ENCODE measurements at regions of chr10 and their contacts with region 1.

Region 1: GRCh38 chr10:35642027-35642792 is at the start of gene FZD8:
- DNase-seq: peak; percentile 93 to 95 (median 94)
- ATAC-seq: peak; percentile 94 to 97 (median 96)
- H3K4me3 ChIP-seq: peak within 1 kb of the TSS; percentile 74 to 97 (median 80)
- H3K27ac ChIP-seq: peak within 1 kb of the TSS; percentile 75 to 97 (median 92)
- H3K4me1 ChIP-seq: peaks cover 0 to 39% (median 17%) of the 10 kb centered on the region in 12 donors
- H3K27me3 ChIP-seq: peaks cover 0 to 48% (median 0%) of the 10 kb centered on the region in 9 donors
- CTCF ChIP-seq: peak in 6 of 12 donors; percentile 6 to 28 (median 12)
- POLR2A ChIP-seq: peak; percentile 89 to 98
- total RNA-seq, gene FZD8: 4.0 to 17.1 (median 7.8) TPM

Region 2: GRCh38 chr10:35716776-35717175 is 74.6 kb after region 1 on chr10:
- intact Hi-C with region 1: no loop called
- DNase-seq: no peak
- ATAC-seq: no peak
- H3K4me3 ChIP-seq: no peak overlapping the region
- H3K27ac ChIP-seq: no peak overlapping the region
- H3K4me1 ChIP-seq: peaks cover 0 to 14% (median 0%) of the 10 kb centered on the region in 12 donors
- H3K27me3 ChIP-seq: no peaks in the 10 kb centered on the region
- CTCF ChIP-seq: no peak
- POLR2A ChIP-seq: no peak

Region 3: DNA sequence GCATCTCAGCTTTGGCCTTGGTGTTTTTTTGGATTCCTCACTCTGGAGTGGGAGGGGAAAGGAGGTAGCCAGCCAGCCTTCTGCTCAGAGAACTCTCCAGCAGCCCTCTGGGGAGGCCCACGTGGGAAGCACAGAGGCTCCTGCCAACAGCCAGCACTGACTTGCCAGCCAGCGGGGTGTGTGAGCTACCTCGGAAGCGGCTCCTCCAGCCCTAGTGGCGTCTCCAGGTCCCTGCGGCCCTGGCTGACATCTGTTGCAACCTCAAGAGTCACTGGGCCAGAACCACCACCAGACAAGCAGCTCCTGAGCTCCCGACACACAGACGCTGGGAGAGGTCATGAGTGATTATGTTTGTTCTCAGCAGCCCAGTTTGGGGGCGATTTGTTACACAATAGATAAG is 180.1 kb after region 1 on chr10:
- intact Hi-C with region 1: loop called in 1 of 10 experiments (anchors 5 kb)
- DNase-seq: peak; percentile 72 to 89 (median 88)
- ATAC-seq: peak; percentile 95 to 99 (median 98)
- H3K4me3 ChIP-seq: no peak overlapping the region
- H3K27ac ChIP-seq: peak overlapping the region in 4 of 12 donors; percentile 8 to 52 (median 24)
- H3K4me1 ChIP-seq: peaks cover 0 to 23% (median 13%) of the 10 kb centered on the region in 12 donors
- H3K27me3 ChIP-seq: no peaks in the 10 kb centered on the region
- CTCF ChIP-seq: peak in 7 of 12 donors; percentile 20 to 50 (median 38)
- POLR2A ChIP-seq: no peak

Region 4: GRCh38 chr10:35986756-35987502 is 344.7 kb after region 1 on chr10:
- intact Hi-C with region 1: loop called in 7 of 10 experiments (anchors 5 to 10 kb)
- DNase-seq: no peak
- ATAC-seq: peak in 2 of 4 donors; percentile 41 to 80
- H3K4me3 ChIP-seq: peak overlapping the region in 3 of 12 donors; percentile 4 to 35 (median 13)
- H3K27ac ChIP-seq: peak overlapping the region in 2 of 12 donors; percentile 1 to 30
- H3K4me1 ChIP-seq: peaks cover 0 to 18% (median 3%) of the 10 kb centered on the region in 12 donors
- H3K27me3 ChIP-seq: no peaks in the 10 kb centered on the region
- CTCF ChIP-seq: no peak
- POLR2A ChIP-seq: no peak

Region 5: DNA sequence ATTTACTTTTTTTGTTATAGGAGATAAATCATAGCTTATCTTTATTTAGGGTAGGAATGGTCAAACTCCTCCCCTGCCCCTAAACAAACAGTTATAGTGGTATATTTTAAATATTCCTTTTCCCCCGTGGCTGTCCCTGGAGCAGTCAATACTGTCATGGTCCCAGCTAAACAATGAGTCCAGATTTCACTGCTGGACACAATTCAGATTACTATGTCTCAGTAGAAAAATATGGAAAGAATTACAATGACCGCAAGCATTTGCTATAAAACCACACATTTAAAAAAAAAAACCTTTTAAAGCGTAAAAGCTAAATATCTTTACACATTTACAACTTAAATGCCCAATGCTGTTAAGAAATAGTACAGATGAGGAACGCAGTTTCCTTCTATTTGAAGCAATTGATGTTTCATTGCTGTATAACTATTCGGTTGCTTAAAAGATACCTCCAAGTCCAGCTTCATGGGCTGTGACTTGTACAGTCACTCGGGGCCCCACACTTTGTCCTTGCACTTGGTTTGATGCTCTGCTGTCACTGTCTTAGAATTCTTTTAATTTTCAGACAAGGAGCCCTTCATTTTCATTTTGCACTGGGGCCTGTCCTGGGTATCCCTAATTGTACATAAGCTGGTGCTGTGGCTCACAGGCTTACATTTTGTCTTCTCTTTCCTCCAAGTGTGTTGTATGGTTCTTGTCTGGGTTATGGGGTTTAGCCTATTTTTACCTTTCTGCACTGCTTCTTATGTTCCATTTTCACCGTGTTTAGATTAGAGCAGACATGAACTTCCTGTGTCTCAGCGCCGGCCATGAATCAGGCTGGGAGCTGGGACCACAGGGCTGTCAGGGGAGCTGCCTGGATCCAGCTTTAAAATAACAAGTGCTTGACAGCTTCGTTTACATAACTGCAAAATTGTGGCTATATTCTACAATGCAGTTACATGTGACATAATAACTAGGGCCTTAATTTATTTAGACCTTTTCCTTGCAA is 530.0 kb after region 1 on chr10:
- intact Hi-C with region 1: loop called in 2 of 10 experiments (anchors 5 to 10 kb)
- DNase-seq: peak in 3 of 5 donors; percentile 26 to 61 (median 52)
- ATAC-seq: peak in 2 of 4 donors; percentile 64 to 89
- H3K4me3 ChIP-seq: no peak overlapping the region
- H3K27ac ChIP-seq: peak overlapping the region in 10 of 12 donors; percentile 2 to 55 (median 30)
- H3K4me1 ChIP-seq: peaks cover 0 to 31% (median 16%) of the 10 kb centered on the region in 12 donors
- H3K27me3 ChIP-seq: no peaks in the 10 kb centered on the region
- CTCF ChIP-seq: no peak
- POLR2A ChIP-seq: no peak

Region 6: DNA sequence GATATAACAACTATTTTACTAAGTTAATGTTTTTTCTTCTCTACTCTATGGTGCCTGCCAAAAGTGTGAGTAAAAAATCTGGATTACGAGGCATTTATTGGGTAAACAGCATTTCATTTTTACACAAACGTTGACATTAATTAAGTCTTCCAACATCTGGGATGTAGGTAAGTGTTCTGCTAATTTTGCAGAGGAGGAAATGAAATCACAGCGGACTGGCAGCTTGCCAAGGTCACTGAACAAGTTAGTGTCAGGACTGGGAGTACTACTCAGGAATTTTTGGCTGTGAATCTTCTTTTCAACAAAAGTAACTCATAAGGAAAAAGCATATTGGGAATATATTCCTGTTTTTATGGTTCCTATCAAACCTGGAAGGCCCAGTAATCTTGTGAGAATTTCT is 612.0 kb after region 1 on chr10:
- intact Hi-C with region 1: loop called in 1 of 10 experiments (anchors 10 kb)
- DNase-seq: peak; percentile 72 to 82 (median 79)
- ATAC-seq: peak; percentile 45 to 83 (median 60)
- H3K4me3 ChIP-seq: no peak overlapping the region
- H3K27ac ChIP-seq: no peak overlapping the region
- H3K4me1 ChIP-seq: peaks cover 0 to 19% (median 5%) of the 10 kb centered on the region in 12 donors
- H3K27me3 ChIP-seq: no peaks in the 10 kb centered on the region
- CTCF ChIP-seq: no peak
- POLR2A ChIP-seq: no peak

Region 7: DNA sequence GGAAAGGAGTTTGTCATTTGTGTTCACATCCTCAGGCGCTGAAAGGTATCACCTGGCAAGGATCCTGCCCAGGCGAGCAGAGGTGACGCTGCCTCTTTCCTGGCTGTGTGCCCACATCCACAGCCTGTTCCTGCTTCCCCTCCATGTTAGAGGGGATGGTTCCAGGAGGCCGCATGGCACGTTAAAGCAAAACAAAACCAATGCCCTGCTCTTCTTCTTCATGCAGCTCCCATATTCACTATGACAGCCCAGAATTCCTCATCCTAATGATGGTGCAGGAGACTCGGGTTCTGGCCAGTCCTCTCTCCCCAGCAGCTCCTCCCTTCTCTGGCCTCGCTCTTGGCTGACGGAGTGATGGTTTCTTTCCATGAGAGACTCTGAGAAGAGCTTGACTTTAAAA is 804.7 kb after region 1 on chr10:
- intact Hi-C with region 1: loop called in 2 of 10 experiments (anchors 5 kb)
- DNase-seq: peak; percentile 56 to 93 (median 80)
- ATAC-seq: peak; percentile 80 to 90 (median 86)
- H3K4me3 ChIP-seq: peak overlapping the region in 1 of 12 donors; percentile 2
- H3K27ac ChIP-seq: peak overlapping the region in 10 of 12 donors; percentile 28 to 79 (median 56)
- H3K4me1 ChIP-seq: peaks cover 0 to 22% (median 9%) of the 10 kb centered on the region in 12 donors
- H3K27me3 ChIP-seq: no peaks in the 10 kb centered on the region
- CTCF ChIP-seq: no peak
- POLR2A ChIP-seq: no peak

Region 8: GRCh38 chr10:36504758-36505157 is 862.5 kb after region 1 on chr10:
- intact Hi-C with region 1: loop called in 8 of 10 experiments (anchors 5 to 10 kb)
- DNase-seq: no peak
- ATAC-seq: peak in 2 of 4 donors; percentile 26 to 45
- H3K4me3 ChIP-seq: no peak overlapping the region
- H3K27ac ChIP-seq: no peak overlapping the region
- H3K4me1 ChIP-seq: peaks cover 0 to 3% (median 0%) of the 10 kb centered on the region in 12 donors
- H3K27me3 ChIP-seq: no peaks in the 10 kb centered on the region
- CTCF ChIP-seq: peak in 7 of 12 donors; percentile 8 to 44 (median 36)
- POLR2A ChIP-seq: no peak